ENCODE measurements at regions of chr15 and their contacts with region 1.

Region 1: GRCh38 chr15:62874959-62875625 is 167.5 kb upstream of the TPM1 start:
- DNase-seq: no peak
- H3K4me3 ChIP-seq: no peak overlapping the region
- H3K27me3 ChIP-seq: no peaks in the 10 kb centered on the region
- CTCF ChIP-seq: no peak

Region 2: DNA sequence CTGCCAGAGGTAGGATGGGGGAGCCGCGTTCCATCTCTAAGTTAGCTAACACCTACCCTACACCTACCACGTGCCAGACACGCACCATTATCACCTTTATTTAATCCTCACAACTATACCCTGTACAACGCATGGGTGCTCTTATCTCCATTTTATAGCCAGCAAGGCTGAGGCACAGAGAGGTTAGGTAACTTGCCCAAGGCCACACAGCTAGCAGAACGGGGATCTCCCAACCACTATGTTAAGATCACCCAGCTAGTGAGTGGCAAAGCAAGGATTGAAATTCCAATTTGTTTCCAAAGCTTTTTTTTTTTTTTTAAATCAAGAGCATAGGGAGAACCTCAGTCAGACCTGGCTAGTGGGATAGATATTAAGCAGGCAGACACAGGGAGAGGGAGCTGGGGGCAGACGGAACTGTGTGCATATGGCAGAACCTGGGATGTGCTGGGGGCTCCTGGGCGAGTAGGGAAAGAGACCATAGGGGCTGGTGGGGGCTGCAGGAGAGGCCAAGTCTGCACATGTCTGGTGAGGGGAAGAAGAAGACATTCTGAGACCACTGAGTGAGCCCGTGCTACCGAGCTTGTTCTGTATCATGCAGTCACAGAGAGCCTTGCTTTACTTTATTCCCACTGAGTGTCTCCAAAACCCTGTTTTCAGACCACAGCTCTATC is 28.8 kb before region 1 on chr15:
- CTCF ChIA-PET with region 1: interaction called, 4 read pairs
- POLR2A ChIA-PET with region 1: interaction called, 14 read pairs
- DNase-seq: no peak
- H3K4me3 ChIP-seq: no peak overlapping the region
- H3K27me3 ChIP-seq: no peaks in the 10 kb centered on the region
- CTCF ChIP-seq: no peak